ENCODE measurements at regions of chr16 and their contacts with region 1.

Region 1: GRCh38 chr16:58129097-58129936 is at the start of gene CFAP20:
- DNase-seq: peak; percentile 98 to 99
- H3K4me3 ChIP-seq: peak within 1 kb of the TSS; percentile 88
- H3K27ac ChIP-seq: peak within 1 kb of the TSS; percentile 57
- H3K4me1 ChIP-seq: peaks cover 34% of the 10 kb centered on the region
- H3K27me3 ChIP-seq: no peaks in the 10 kb centered on the region
- CTCF ChIP-seq: no peak
- total RNA-seq, gene CFAP20: 35.9 and 49.6 TPM in 2 replicates

Region 2: GRCh38 chr16:57619832-57620636 is 509.3 kb before region 1 on chr16:
- CTCF ChIA-PET with region 1: no interaction called
- POLR2A ChIA-PET with region 1: interaction called, 16 read pairs
- intact Hi-C with region 1: no loop called
- DNase-seq: peak; percentile 87
- H3K4me3 ChIP-seq: peak overlapping the region; percentile 76
- H3K27ac ChIP-seq: peak overlapping the region; percentile 92
- H3K4me1 ChIP-seq: peaks cover 72% of the 10 kb centered on the region
- H3K27me3 ChIP-seq: no peaks in the 10 kb centered on the region
- CTCF ChIP-seq: no peak

Region 3: GRCh38 chr16:57988929-57989328 is 140.4 kb before region 1 on chr16:
- CTCF ChIA-PET with region 1: no interaction called
- POLR2A ChIA-PET with region 1: no interaction called
- intact Hi-C with region 1: no loop called
- DNase-seq: peak; percentile 51 to 58
- H3K4me3 ChIP-seq: no peak overlapping the region
- H3K27ac ChIP-seq: 0 out of 2 replicates have a peak overlapping the region, but pooled peaks have one; percentile 9
- H3K4me1 ChIP-seq: peaks cover 33% of the 10 kb centered on the region
- H3K27me3 ChIP-seq: no peaks in the 10 kb centered on the region
- CTCF ChIP-seq: no peak

Region 4: GRCh38 chr16:58049232-58050185 is 79.8 kb before region 1 on chr16:
- CTCF ChIA-PET with region 1: no interaction called
- POLR2A ChIA-PET with region 1: no interaction called
- intact Hi-C with region 1: no loop called
- DNase-seq: no peak
- H3K4me3 ChIP-seq: no peak overlapping the region
- H3K27ac ChIP-seq: no peak overlapping the region
- H3K4me1 ChIP-seq: no peaks in the 10 kb centered on the region
- H3K27me3 ChIP-seq: no peaks in the 10 kb centered on the region
- CTCF ChIP-seq: no peak

Region 5: DNA sequence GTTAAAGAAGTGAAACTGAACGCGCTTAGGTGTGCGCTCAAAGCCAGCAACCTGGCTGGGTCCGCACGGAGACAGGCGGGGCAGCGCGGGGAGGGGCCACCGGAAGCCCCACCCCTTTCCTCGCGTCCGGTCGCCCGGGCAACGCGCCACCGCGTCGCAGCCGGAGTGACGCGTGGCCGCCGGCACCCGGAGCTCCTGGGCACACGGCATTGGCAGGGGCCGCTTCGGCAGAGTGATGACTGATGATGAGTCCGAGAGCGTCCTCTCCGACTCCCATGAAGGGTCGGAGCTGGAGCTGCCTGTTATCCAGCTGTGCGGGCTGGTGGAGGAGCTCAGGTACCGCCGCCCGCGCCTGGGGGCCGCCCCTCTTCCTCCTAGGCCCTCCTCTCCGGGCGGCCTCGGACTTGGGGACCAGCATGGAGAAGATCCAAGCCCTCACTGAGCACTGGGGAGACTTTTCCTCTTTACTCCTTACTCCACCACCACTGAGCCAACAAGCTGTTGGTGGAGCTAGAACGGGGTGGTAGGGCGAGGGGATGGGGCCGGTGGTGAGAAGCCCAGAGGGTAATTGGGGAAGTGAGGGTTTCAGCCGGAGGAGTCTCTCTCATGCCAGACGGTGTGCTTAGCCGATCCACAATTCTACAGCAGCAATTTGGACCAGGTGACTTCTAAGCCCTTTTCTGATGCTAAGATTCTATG is 120.6 kb after region 1 on chr16:
- CTCF ChIA-PET with region 1: no interaction called
- POLR2A ChIA-PET with region 1: no interaction called
- intact Hi-C with region 1: no loop called
- DNase-seq: peak; percentile 78 to 92
- H3K4me3 ChIP-seq: peak overlapping the region; percentile 82
- H3K27ac ChIP-seq: peak overlapping the region; percentile 57
- H3K4me1 ChIP-seq: peaks cover 11% of the 10 kb centered on the region
- H3K27me3 ChIP-seq: no peaks in the 10 kb centered on the region
- CTCF ChIP-seq: no peak

Region 6: GRCh38 chr16:58409316-58409973 is 280.1 kb after region 1 on chr16:
- CTCF ChIA-PET with region 1: no interaction called
- POLR2A ChIA-PET with region 1: interaction called, 13 read pairs
- intact Hi-C with region 1: no loop called
- DNase-seq: peak; percentile 83 to 94
- H3K4me3 ChIP-seq: no peak overlapping the region; the same call in 1 of the 2 replicates
- H3K27ac ChIP-seq: peak overlapping the region; percentile 98
- H3K4me1 ChIP-seq: peaks cover 51% of the 10 kb centered on the region
- H3K27me3 ChIP-seq: no peaks in the 10 kb centered on the region
- CTCF ChIP-seq: no peak

Measured in PC-9 (cell line).